GM12878 (cell line): ENCODE measurements at regions of chr6 and their contacts with region 1.

Region 1: DNA sequence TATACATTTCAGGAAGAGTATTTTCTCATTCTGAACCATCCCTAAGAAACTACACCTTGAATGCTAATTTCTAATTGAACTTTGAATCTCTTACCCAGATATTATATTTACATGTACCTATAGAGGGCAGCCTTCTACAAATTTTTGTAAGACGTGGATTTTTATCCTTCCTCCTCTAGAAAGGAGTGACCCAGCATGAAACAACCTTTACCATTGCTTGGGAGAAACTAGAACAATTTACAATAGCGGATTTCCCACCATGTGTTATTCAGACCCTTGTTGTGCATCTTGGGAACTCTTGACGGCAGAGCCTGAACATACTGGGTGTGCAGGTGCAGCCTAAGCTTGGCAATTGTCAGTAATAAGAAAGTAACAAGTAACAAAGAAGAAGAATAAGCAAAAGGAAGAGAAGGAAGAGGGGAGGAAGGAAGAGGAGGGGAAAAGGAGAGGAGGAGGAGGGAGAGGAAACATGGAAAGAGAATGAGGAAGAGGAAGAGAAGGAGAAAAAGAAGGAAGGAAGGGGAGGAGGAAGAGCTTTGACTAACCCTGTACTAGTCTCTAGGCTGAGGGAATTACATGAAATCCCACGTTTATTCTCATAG is 10.8 kb upstream of the TAAR1 start:
- DNase-seq: no peak
- ATAC-seq: peak; percentile 86
- H3K4me3 ChIP-seq: no peak overlapping the region
- H3K27ac ChIP-seq: no peak overlapping the region
- H3K4me1 ChIP-seq: no peaks in the 10 kb centered on the region
- H3K27me3 ChIP-seq: no peaks in the 10 kb centered on the region
- CTCF ChIP-seq: peak; percentile 38 to 61 (median 48); a peak in 4 of 6 replicates
- EP300 ChIP-seq: no peak
- POLR2A ChIP-seq: no peak
- RAD21 ChIP-seq: peak; percentile 66

Region 2: DNA sequence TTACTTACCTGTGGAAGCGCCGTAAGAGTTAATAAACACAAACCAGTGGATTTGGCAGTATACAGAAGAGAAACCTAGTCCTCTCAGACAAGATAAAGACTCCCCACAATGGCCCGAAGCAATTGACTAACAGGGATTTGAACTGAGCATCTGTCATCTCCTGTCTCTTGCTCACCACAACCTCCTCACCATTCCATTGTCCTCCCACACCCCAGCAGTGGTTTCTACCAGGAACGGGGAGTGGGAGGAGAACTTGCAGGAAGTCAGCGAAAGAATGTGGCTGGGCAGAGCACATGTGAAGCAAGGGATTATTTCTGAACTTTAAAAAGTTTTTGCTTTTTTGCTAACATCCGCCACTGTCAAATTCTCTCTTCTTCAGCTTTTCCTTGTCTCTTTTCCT is 13.8 kb after region 1 on chr6:
- CTCF ChIA-PET with region 1: interaction called, 12 read pairs
- POLR2A ChIA-PET with region 1: no interaction called
- RAD21 ChIA-PET with region 1: no interaction called
- SMC1A ChIA-PET with region 1: interaction called, 13 read pairs
- in situ Hi-C with region 1: no loop called
- intact Hi-C with region 1: no loop called
- DNase-seq: no peak
- ATAC-seq: no peak
- H3K4me3 ChIP-seq: no peak overlapping the region
- H3K27ac ChIP-seq: no peak overlapping the region
- H3K4me1 ChIP-seq: no peaks in the 10 kb centered on the region
- H3K27me3 ChIP-seq: no peaks in the 10 kb centered on the region
- CTCF ChIP-seq: no peak
- EP300 ChIP-seq: no peak
- POLR2A ChIP-seq: no peak
- RAD21 ChIP-seq: no peak

Region 3: GRCh38 chr6:132780770-132781371 is 111.1 kb after region 1 on chr6:
- CTCF ChIA-PET with region 1: interaction called, 19 read pairs
- POLR2A ChIA-PET with region 1: no interaction called
- RAD21 ChIA-PET with region 1: interaction called, 17 read pairs
- SMC1A ChIA-PET with region 1: interaction called, 14 read pairs
- in situ Hi-C with region 1: no loop called
- intact Hi-C with region 1: no loop called
- DNase-seq: no peak
- ATAC-seq: peak; percentile 84
- H3K4me3 ChIP-seq: no peak overlapping the region
- H3K27ac ChIP-seq: no peak overlapping the region
- H3K4me1 ChIP-seq: no peaks in the 10 kb centered on the region
- H3K27me3 ChIP-seq: no peaks in the 10 kb centered on the region
- CTCF ChIP-seq: peak; percentile 42 to 50 (median 43); a peak in 4 of 6 replicates
- EP300 ChIP-seq: no peak
- POLR2A ChIP-seq: no peak
- RAD21 ChIP-seq: peak; percentile 37; the same call in 1 of the 2 replicates

Region 4: DNA sequence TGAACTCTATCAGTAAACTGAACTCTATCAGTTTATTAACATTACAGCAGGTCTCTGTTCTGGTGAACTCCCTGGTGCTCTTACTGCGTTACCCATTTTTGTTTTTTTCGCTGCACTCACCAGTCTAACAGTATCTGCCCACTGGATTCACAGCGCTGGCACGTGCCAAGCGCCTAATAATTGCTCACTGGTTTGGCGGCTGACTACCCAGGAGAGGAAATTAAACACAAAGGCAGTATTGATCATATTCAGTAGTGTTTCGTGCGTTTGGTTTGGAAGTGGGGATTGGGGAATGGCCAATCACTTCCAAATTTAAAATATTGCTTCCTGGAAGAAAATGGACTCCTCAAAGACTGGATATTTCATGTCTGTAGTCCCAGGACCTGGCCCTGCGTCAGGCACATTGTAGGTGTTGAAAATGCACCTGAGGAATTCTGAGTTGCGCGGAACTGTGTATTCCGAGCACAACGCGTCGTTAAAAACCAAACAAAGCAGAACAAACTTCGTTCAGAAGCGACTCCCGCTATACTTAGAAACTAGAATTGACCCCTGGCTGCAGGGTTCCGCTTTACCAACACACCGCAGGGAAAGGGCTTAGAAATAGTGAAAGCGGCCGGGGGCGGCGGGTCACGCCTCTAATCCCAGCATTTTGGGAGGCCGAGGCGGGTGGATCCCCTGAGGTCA is 143.5 kb after region 1 on chr6:
- CTCF ChIA-PET with region 1: interaction called, 25 read pairs
- POLR2A ChIA-PET with region 1: interaction called, 6 read pairs
- RAD21 ChIA-PET with region 1: interaction called, 4 read pairs
- SMC1A ChIA-PET with region 1: interaction called, 4 read pairs
- in situ Hi-C with region 1: no loop called
- intact Hi-C with region 1: loop called (anchors 5 kb)
- DNase-seq: no peak
- ATAC-seq: peak; percentile 52
- H3K4me3 ChIP-seq: peak overlapping the region; percentile 85
- H3K27ac ChIP-seq: peak overlapping the region; percentile 96
- H3K4me1 ChIP-seq: peaks cover 6% of the 10 kb centered on the region; the same call in 1 of the 2 replicates
- H3K27me3 ChIP-seq: peaks cover 0 to 5% of the 10 kb centered on the region in 2 experiments; a peak in 1 of 4 replicates
- CTCF ChIP-seq: no peak
- EP300 ChIP-seq: no peak
- POLR2A ChIP-seq: peak; percentile 23; the same call in 1 of the 2 replicates
- RAD21 ChIP-seq: no peak

Region 5: GRCh38 chr6:132952031-132952867 is 282.5 kb after region 1 on chr6:
- CTCF ChIA-PET with region 1: no interaction called
- POLR2A ChIA-PET with region 1: no interaction called
- RAD21 ChIA-PET with region 1: interaction called, 3 read pairs
- SMC1A ChIA-PET with region 1: no interaction called
- in situ Hi-C with region 1: no loop called
- intact Hi-C with region 1: loop called (anchors 10 kb)
- DNase-seq: no peak
- ATAC-seq: no peak
- H3K4me3 ChIP-seq: no peak overlapping the region
- H3K27ac ChIP-seq: no peak overlapping the region
- H3K4me1 ChIP-seq: no peaks in the 10 kb centered on the region
- H3K27me3 ChIP-seq: peaks cover 0 to 2% of the 10 kb centered on the region in 2 experiments; a peak in 1 of 4 replicates
- CTCF ChIP-seq: no peak
- EP300 ChIP-seq: no peak
- POLR2A ChIP-seq: no peak
- RAD21 ChIP-seq: no peak